ENCODE measurements at regions of chr10 and their contacts with region 1.

Region 1: GRCh38 chr10:97445722-97446639 is at the starts of genes EXOSC1 and ZDHHC16:
- DNase-seq: peak; percentile 98
- ATAC-seq: peak; percentile 94
- H3K4me3 Mint-ChIP-seq: peak within 1 kb of the TSS; percentile 97
- H3K27ac Mint-ChIP-seq: peak within 1 kb of the TSS; percentile 85
- H3K4me1 Mint-ChIP-seq: peaks cover 42% of the 10 kb centered on the region
- H3K27me3 Mint-ChIP-seq: no peaks in the 10 kb centered on the region
- CTCF ChIP-seq: no peak
- total RNA-seq, gene EXOSC1: 43.3 to 49.2 TPM
- total RNA-seq, gene ZDHHC16: 23.8 to 25.2 TPM

Region 2: DNA sequence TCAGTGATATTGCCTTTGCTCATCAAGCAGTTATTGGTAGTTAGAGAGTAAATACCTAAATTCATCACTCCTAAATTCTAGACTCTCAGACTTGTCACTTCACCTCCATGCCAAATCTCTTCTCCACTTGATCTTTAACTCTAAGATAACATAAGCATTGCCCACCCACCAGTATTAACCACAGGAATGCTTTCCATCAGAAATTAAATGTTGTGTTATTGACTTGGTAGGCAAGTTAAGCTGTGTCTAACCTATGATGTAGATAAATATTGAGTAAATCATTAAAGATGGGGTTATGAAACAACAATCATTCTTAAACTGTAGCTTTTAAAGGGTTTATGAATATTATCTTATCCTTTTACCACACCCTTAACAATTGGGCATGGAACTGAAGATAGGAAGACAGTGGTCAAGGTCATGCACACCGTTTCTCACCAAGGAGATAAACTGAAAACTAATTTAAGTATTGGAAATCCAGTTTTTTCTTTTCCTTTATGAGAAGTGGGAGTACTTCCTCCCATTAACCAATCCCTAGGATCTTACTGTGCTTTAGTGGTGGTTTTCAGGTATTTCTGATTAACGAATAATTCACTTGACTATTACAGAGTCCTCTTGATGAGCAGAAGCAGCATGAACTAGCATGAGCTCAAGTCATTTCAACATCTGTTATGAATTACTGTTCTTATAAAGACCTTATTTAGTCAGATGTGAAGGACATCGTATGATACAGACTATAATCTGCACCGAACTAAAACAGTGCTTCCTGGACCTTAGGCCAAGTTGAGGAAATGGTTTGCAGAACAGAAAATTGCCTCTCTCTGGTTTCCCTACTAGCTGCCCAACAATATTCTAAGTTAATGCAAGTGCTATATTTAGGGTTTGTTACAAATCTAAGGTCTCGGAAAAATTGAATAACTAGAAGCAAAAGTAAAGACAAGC is 471.9 kb before region 1 on chr10:
- CTCF ChIA-PET with region 1: no interaction called
- POLR2A ChIA-PET with region 1: no interaction called
- intact Hi-C with region 1: no loop called
- DNase-seq: no peak
- ATAC-seq: no peak
- H3K4me3 Mint-ChIP-seq: no peak overlapping the region
- H3K27ac Mint-ChIP-seq: no peak overlapping the region
- H3K4me1 Mint-ChIP-seq: peaks cover 17% of the 10 kb centered on the region
- H3K27me3 Mint-ChIP-seq: no peaks in the 10 kb centered on the region
- CTCF ChIP-seq: no peak

Region 3: GRCh38 chr10:97407211-97407951 is 38.6 kb before region 1 on chr10:
- CTCF ChIA-PET with region 1: interaction called, 19 read pairs
- POLR2A ChIA-PET with region 1: interaction called, 4 read pairs
- intact Hi-C with region 1: loop called (anchors 5 kb)
- DNase-seq: peak; percentile 75
- ATAC-seq: peak; percentile 96
- H3K4me3 Mint-ChIP-seq: peak overlapping the region; percentile 31
- H3K27ac Mint-ChIP-seq: peak overlapping the region; percentile 62
- H3K4me1 Mint-ChIP-seq: peaks cover 10% of the 10 kb centered on the region
- H3K27me3 Mint-ChIP-seq: no peaks in the 10 kb centered on the region
- CTCF ChIP-seq: peak; percentile 97

Region 4: DNA sequence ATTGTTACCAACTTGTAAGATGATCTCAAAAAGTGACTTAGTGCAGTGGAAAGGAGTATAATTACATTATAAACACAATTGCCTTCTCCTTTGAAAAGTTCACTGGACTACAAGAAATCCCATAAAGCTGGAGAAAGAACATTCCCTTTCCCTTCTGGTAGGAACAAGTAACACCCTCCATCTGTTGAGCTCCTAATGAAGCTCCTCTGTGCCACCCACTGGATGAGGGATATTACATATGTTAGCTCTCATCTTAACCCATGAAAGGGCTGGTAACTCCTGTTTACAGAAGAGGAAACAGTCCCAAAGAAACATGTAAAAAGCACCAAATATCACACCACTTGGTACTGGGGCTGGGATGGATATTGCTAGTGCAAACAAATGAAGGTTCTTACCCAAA is 11.9 kb before region 1 on chr10:
- CTCF ChIA-PET with region 1: interaction called, 4 read pairs
- POLR2A ChIA-PET with region 1: interaction called, 26 read pairs
- intact Hi-C with region 1: no loop called
- DNase-seq: no peak
- ATAC-seq: no peak
- H3K4me3 Mint-ChIP-seq: no peak overlapping the region
- H3K27ac Mint-ChIP-seq: peak overlapping the region; percentile 66
- H3K4me1 Mint-ChIP-seq: peaks cover 11% of the 10 kb centered on the region
- H3K27me3 Mint-ChIP-seq: no peaks in the 10 kb centered on the region
- CTCF ChIP-seq: no peak

Measured in activated CD8-positive, alpha-beta T cell treated with anti-CD3 and anti-CD28 coated beads for 36 hours (primary cell).